Endothelial cell of umbilical vein (primary cell): ENCODE measurements at regions of chr14 and their contacts with region 1.

Region 1: DNA sequence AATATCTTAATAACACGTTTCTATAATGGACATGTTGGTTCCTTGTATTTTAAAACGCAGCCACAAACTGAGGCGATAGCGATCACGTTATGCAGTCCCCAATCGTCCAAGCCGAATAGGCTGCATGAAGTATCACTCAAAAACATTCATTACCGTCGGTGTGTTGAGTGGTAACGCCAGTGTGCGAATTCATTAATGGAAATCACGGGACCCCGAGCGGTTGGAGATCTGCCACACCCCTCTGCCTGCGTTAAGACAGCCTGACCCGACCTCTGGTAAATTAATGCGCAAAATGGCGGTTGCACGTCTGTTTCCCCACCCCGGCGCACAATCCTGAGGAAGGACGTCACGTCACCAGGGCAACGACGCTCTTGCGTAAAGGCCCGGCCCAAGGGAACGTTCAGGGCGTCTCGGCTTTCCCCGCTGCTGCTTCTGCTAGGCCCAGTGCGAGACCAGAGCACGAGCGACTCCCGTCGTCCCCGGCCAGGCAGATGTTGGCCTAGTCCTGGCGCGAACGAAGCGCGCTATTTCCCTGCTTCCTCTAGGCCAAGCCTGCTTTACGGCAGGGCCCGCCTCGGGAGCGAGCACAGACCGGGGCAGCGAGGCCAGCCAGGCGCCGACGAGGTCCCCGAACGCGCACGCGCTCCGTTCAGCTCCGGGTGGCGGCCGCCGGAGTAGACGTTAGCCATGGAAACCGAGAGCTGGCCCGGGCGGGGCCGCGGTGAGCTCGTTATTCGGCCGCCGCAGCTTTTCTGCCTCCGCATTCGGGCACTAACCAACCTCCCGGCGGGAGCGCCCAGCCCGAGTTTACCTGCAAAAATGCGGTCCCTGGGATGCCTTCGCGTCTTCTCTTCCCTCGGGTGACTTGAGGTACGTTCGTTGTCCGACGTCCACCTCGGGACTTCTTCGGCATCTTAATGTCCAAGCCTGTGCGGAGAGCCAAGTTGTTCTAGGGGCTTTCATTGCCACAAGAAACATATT is at the start of gene PCNX4:
- DNase-seq: peak; percentile 99
- H3K4me3 ChIP-seq: peak within 1 kb of the TSS; percentile 68 to 86 (median 86)
- H3K27ac ChIP-seq: peak within 1 kb of the TSS; percentile 93
- H3K4me1 ChIP-seq: peaks cover 25% of the 10 kb centered on the region
- H3K27me3 ChIP-seq: no peaks in the 10 kb centered on the region
- CTCF ChIP-seq: no peak
- POLR2A ChIP-seq: peak; percentile 96
- total RNA-seq, gene PCNX4: 41.4 and 51.6 TPM in 2 replicates

Region 2: DNA sequence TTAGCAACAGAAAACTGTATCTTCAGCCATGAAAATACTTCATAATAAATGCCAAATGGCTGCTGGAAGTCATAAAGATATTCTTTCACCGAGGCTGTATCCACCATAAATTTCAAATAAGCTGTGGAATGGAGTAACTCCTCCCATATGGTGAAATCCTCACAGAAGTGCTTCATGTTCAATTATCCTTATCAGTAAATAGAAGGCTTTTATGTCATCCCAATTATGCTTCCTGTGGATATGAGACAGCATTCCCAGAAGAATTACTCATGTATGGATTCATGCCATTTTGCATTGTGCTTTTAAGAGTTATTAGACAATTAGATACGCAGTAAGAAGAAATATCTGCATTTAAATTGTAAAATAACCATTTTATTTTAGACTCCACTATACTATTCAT is 320.3 kb before region 1 on chr14:
- CTCF ChIA-PET with region 1: no interaction called
- POLR2A ChIA-PET with region 1: no interaction called
- dilution Hi-C with region 1: no loop called
- intact Hi-C with region 1: loop called (anchors 5 kb)
- DNase-seq: peak; percentile 70
- H3K4me3 ChIP-seq: peak overlapping the region in 1 of 3 experiments; percentile 43
- H3K27ac ChIP-seq: peak overlapping the region; percentile 95
- H3K4me1 ChIP-seq: peaks cover 22% of the 10 kb centered on the region
- H3K27me3 ChIP-seq: peaks cover 0 to 25% of the 10 kb centered on the region in 2 experiments
- CTCF ChIP-seq: no peak
- POLR2A ChIP-seq: no peak

Region 3: DNA sequence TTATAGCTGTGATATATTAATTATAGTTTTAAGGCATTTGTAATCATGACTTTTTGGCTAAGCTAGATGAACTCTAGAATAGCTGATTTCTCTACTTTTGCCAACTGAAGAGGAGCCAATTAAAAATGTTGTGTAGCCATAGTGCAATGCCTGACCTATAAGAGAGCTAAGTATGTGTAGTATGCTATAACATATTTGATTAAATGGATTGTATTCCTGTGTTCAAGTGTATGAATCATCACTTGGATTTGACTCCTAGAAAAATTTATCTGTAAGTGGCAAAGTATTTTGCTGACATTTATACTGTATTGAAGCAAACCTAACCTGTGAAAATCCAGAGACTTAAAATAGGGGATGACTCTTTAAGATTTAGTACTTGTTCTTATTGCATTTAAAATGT is 34.1 kb after region 1 on chr14:
- CTCF ChIA-PET with region 1: no interaction called
- POLR2A ChIA-PET with region 1: no interaction called
- dilution Hi-C with region 1: no loop called
- intact Hi-C with region 1: no loop called
- DNase-seq: no peak
- H3K4me3 ChIP-seq: no peak overlapping the region
- H3K27ac ChIP-seq: no peak overlapping the region
- H3K4me1 ChIP-seq: no peaks in the 10 kb centered on the region
- H3K27me3 ChIP-seq: no peaks in the 10 kb centered on the region
- CTCF ChIP-seq: no peak
- POLR2A ChIP-seq: no peak

Region 4: DNA sequence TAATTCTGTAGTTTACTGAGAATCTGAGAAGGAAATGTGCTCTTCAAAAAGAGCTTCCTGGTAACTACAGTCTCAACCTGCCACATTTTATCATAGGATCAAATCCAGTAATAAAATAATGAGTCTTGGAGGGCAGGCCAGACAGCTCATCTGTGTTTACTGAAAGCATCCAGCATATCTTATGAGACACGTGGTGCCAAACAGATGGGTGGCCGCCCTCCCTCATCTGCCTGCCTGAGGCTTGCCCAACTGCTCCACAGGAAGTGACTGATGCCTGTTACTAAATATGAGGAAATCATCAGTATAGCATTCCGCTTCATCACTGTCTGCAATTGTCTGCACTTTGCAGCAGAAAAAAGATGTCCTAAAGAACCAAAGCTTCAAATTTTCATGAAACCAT is 59.9 kb after region 1 on chr14:
- CTCF ChIA-PET with region 1: no interaction called
- POLR2A ChIA-PET with region 1: no interaction called
- dilution Hi-C with region 1: no loop called
- intact Hi-C with region 1: loop called (anchors 5 kb)
- DNase-seq: peak; percentile 53
- H3K4me3 ChIP-seq: no peak overlapping the region
- H3K27ac ChIP-seq: peak overlapping the region; percentile 50
- H3K4me1 ChIP-seq: peaks cover 18% of the 10 kb centered on the region
- H3K27me3 ChIP-seq: no peaks in the 10 kb centered on the region
- CTCF ChIP-seq: no peak
- POLR2A ChIP-seq: no peak

Region 5: DNA sequence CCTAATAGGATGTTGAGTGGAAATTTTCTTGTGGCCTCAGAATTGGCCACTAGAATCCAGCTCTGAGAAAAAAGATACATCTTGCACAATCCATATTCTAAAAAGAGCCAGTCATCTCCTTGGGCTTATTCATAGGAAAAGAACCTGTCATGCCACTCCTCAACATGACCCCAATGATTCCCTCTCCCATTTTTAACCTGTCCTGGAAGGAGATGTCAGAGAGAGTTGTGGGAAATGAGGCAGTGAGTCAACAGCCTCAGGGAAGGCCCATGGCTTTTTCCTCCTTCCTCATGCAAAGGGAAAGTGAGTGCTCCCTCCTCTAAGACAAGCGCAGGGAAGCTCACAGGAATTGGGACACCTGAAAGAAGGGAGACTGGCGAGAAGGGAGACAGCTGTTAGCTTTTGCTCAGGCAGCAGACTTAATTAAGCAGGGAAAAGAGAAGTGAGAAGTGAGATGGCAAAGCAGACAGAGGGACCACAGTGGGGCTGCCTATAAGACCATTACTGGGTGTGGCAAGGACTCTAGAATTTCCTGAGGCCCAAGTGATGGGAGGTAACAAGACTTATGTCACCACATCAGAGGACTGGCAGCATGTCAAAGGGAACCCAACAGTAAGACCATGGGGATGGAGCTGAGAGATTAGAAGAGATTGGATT is 83.5 kb after region 1 on chr14:
- CTCF ChIA-PET with region 1: no interaction called
- POLR2A ChIA-PET with region 1: no interaction called
- dilution Hi-C with region 1: no loop called
- intact Hi-C with region 1: no loop called
- DNase-seq: no peak
- H3K4me3 ChIP-seq: no peak overlapping the region
- H3K27ac ChIP-seq: no peak overlapping the region
- H3K4me1 ChIP-seq: no peaks in the 10 kb centered on the region
- H3K27me3 ChIP-seq: peaks cover 3 to 8% of the 10 kb centered on the region in 2 experiments
- CTCF ChIP-seq: no peak
- POLR2A ChIP-seq: no peak